ENCODE measurements at regions of chr7 and their contacts with region 1.

Region 1: DNA sequence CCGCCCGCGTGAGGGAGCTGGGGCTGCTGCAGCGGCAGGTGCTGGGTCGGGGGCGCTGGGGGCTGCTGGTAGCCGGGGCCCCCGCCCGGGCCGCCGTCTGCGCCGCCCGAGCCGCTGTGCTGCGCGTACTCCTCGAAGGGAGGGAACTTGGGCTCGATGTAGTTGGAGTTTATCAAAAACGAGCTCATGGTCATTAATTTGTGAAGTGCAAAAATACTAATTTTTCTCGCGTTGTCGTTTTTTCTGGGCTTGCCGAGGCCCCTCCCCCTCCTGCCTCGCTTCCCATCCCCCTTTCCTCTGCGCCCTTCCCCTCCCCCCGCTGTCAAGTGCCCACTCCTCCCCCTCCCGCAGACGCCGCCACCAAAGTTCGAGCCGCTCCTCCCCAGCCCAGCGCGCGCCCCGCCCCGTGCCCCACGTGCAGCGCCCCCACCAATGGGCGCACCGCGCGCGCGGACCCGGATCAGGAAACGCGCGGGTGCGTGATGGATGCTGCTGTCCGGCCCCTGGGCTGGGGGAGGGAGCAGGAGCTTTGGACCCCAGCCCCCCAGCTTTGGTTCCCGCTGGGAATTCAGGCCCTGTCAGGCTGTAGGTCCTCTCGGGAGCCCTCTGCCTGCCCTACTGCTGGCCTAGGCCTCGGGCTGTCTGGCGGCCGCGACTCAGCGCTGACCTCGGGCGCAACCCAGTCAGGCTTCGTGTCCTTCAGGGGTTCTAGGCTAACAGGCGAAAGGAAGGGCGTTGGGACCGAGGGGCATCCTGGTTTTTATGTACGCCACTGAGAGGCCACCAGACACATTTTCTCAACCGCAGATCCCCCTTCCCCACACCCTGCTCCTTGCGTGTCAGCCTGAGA is at the start of gene HOXA4:
- DNase-seq: no peak
- H3K4me3 ChIP-seq: peak within 1 kb of the TSS; percentile 68
- CTCF ChIP-seq: no peak

Region 2: GRCh38 chr7:27143023-27143949 is 12.5 kb after region 1 on chr7 and contains the start of gene HOXA5:
- CTCF ChIA-PET with region 1: interaction called, 19 read pairs
- POLR2A ChIA-PET with region 1: no interaction called
- DNase-seq: no peak
- H3K4me3 ChIP-seq: peak within 1 kb of the TSS; percentile 48
- CTCF ChIP-seq: peak; percentile 59

Region 3: GRCh38 chr7:27150568-27151340 is 20.0 kb after region 1 on chr7:
- CTCF ChIA-PET with region 1: interaction called, 16 read pairs
- POLR2A ChIA-PET with region 1: interaction called, 6 read pairs
- DNase-seq: no peak
- H3K4me3 ChIP-seq: peak overlapping the region; percentile 72
- CTCF ChIP-seq: peak; percentile 91